Thyroid gland (tissue), 4 donors: ENCODE measurements at regions of chr11 and their contacts with region 1.

Region 1: GRCh38 chr11:19561011-19561410 is 151.6 kb upstream of the NAV2 start:
- DNase-seq: no peak
- H3K4me3 ChIP-seq: no peak overlapping the region
- H3K27ac ChIP-seq: no peak overlapping the region
- H3K4me1 ChIP-seq: peaks cover 8 to 30% of the 10 kb centered on the region in 2 donors
- H3K27me3 ChIP-seq: no peaks in the 10 kb centered on the region
- CTCF ChIP-seq: no peak
- POLR2A ChIP-seq: no peak

Region 2: DNA sequence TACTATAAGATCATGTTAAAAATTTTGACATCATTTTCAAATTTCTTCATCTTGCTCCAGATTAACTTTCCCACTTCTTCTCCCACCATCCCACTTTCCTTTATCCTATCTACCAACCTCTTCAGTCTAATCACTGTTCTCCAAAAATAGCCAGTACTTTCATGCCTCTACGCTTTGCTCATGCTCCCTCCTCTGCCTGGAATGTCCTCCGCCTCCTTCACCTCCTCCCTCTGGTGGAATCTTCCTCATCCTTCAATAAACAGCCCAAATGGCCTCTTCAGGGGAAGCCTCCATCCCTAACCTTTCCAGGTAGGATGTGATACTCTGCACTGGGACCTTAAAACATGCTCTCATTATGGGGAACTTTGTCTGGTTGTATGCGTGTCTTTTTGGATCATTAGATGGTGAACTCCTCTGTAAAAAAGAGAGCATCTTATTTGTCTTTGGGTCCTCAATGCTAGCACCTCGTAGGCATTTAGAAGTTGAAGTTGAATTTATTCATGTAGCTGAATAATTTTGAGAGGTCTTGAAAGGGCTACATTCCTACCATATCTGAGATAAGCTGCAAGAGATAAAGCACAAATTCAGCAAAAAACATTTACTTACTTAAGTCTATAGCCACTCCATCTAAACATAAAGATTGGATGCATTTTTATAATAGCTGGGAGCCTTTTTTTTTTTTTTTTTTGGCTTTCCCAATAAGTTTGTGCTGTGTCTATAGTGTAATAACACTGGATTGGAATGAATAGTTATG is 351.2 kb before region 1 on chr11:
- intact Hi-C with region 1: no loop called
- DNase-seq: no peak
- H3K4me3 ChIP-seq: no peak overlapping the region
- H3K27ac ChIP-seq: no peak overlapping the region
- H3K4me1 ChIP-seq: no peaks in the 10 kb centered on the region
- H3K27me3 ChIP-seq: no peaks in the 10 kb centered on the region
- CTCF ChIP-seq: no peak
- POLR2A ChIP-seq: no peak

Region 3: GRCh38 chr11:19742588-19743292 is 181.7 kb after region 1 on chr11:
- intact Hi-C with region 1: loop called (anchors 2 kb)
- DNase-seq: peak; percentile 86 to 90
- H3K4me3 ChIP-seq: no peak overlapping the region
- H3K27ac ChIP-seq: peak overlapping the region; percentile 40 to 77 (median 60)
- H3K4me1 ChIP-seq: peaks cover 16 to 48% of the 10 kb centered on the region in 2 donors
- H3K27me3 ChIP-seq: no peaks in the 10 kb centered on the region
- CTCF ChIP-seq: peak; percentile 72 to 99 (median 92)
- POLR2A ChIP-seq: no peak

Region 4: GRCh38 chr11:19814421-19814820 is 253.4 kb after region 1 on chr11:
- intact Hi-C with region 1: loop called (anchors 10 kb)
- DNase-seq: no peak
- H3K4me3 ChIP-seq: no peak overlapping the region
- H3K27ac ChIP-seq: no peak overlapping the region
- H3K4me1 ChIP-seq: peaks cover 14 to 38% of the 10 kb centered on the region in 2 donors
- H3K27me3 ChIP-seq: no peaks in the 10 kb centered on the region
- CTCF ChIP-seq: no peak
- POLR2A ChIP-seq: no peak

Region 5: GRCh38 chr11:19903620-19904069 is 342.6 kb after region 1 on chr11:
- intact Hi-C with region 1: loop called (anchors 5 kb)
- DNase-seq: peak; percentile 88 to 89
- H3K4me3 ChIP-seq: no peak overlapping the region
- H3K27ac ChIP-seq: peak overlapping the region in 2 of 3 donors; percentile 67 to 70
- H3K4me1 ChIP-seq: peaks cover 26 to 63% of the 10 kb centered on the region in 2 donors
- H3K27me3 ChIP-seq: no peaks in the 10 kb centered on the region
- CTCF ChIP-seq: peak; percentile 35 to 92 (median 78)
- POLR2A ChIP-seq: no peak